Activated CD8-positive, alpha-beta T cell treated with anti-CD3 and anti-CD28 coated beads for 36 hours (primary cell): ENCODE measurements at regions of chr5 and their contacts with region 1.

Region 1: DNA sequence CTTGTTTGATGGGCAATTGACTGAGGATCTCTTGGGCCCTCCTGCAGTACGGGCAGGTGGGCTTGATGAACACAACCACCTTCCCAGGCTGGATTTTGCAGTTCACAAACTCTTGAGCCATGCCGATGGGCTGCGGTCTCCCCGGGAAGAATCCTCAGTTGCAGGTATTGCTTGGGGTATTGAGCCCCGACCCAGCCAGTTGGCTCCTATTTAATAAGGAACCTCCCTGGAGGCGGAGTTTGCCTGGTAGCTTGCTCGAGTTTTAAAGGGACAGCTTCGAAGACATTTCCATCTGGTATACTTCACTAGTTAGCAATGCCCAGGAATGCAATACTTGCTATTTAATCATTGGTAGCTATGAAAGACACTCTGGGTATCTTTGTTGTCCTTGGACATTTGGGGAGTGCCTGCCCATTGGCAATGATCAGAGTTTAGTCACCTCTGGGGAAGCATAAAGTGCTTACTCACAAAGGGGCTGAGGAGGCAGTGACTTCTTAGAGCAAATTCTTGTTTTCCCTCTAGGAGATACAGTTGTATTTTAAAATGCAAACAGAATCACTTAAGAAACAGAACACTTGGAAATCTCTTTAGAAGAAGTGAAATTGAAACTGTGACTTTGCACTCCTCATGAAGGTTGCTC is at the start of gene GLRX:
- DNase-seq: peak; percentile 73
- ATAC-seq: peak; percentile 15
- H3K4me3 Mint-ChIP-seq: peak within 1 kb of the TSS; percentile 87
- H3K27ac Mint-ChIP-seq: peak within 1 kb of the TSS; percentile 93
- H3K4me1 Mint-ChIP-seq: peaks cover 44% of the 10 kb centered on the region
- H3K27me3 Mint-ChIP-seq: no peaks in the 10 kb centered on the region
- CTCF ChIP-seq: no peak
- total RNA-seq, gene GLRX: 28.4 to 32.6 TPM

Region 2: GRCh38 chr5:95808686-95809413 is 13.8 kb before region 1 on chr5:
- CTCF ChIA-PET with region 1: interaction called, 19 read pairs
- POLR2A ChIA-PET with region 1: interaction called, 102 read pairs
- intact Hi-C with region 1: no loop called
- DNase-seq: peak; percentile 90
- ATAC-seq: peak; percentile 99
- H3K4me3 Mint-ChIP-seq: peak overlapping the region; percentile 52
- H3K27ac Mint-ChIP-seq: peak overlapping the region; percentile 86
- H3K4me1 Mint-ChIP-seq: peaks cover 56% of the 10 kb centered on the region
- H3K27me3 Mint-ChIP-seq: no peaks in the 10 kb centered on the region
- CTCF ChIP-seq: no peak

Region 3: GRCh38 chr5:95835682-95836385 is 13.2 kb after region 1 on chr5:
- CTCF ChIA-PET with region 1: interaction called, 14 read pairs
- POLR2A ChIA-PET with region 1: interaction called, 11 read pairs
- intact Hi-C with region 1: no loop called
- DNase-seq: peak; percentile 41
- ATAC-seq: no peak
- H3K4me3 Mint-ChIP-seq: peak overlapping the region; percentile 74
- H3K27ac Mint-ChIP-seq: peak overlapping the region; percentile 93
- H3K4me1 Mint-ChIP-seq: peaks cover 40% of the 10 kb centered on the region
- H3K27me3 Mint-ChIP-seq: no peaks in the 10 kb centered on the region
- CTCF ChIP-seq: no peak

Region 4: GRCh38 chr5:95939465-95939864 is 116.8 kb after region 1 on chr5:
- CTCF ChIA-PET with region 1: no interaction called
- POLR2A ChIA-PET with region 1: no interaction called
- intact Hi-C with region 1: no loop called
- DNase-seq: no peak
- ATAC-seq: no peak
- H3K4me3 Mint-ChIP-seq: no peak overlapping the region
- H3K27ac Mint-ChIP-seq: no peak overlapping the region
- H3K4me1 Mint-ChIP-seq: peaks cover 11% of the 10 kb centered on the region
- H3K27me3 Mint-ChIP-seq: no peaks in the 10 kb centered on the region
- CTCF ChIP-seq: no peak